Sigmoid colon (tissue), 7 donors: ENCODE measurements at regions of chr7 and their contacts with region 1.

Region 1: DNA sequence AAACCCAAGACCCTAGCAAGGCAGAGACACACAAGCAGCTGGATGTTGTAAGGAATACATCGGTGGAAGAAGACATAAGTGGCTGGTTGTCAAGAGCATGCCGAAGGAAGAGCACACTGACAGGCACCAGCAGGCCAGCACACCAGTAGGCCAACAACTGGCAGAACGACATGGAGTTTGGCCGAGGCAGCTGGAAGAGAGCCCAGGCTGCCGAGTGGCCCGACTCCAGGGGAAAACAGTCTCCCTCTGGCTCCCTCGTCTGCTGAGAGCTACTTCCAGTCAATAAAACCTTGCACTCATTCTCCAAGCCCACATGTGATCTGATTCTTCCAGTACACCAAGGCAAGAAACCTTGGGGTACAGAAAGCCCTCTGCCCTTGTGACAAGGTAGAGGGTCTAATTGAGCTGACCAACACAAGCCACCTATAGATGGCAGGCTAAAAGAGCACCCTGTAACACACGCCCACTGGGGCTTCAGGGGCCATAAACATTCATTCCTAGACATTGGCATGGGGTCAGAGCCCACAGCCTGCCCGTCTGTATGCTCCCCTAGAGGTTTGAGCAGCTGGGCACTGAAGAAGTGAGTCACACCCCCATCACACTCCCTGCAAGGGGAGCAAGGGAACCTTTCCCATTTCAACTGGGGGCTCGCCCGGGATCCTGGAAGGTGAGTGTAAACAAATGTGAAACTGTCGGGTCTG is 14.7 kb upstream of the TNS3 start:
- DNase-seq: peak; percentile 91
- H3K4me3 ChIP-seq: no peak overlapping the region
- H3K27ac ChIP-seq: peak overlapping the region in 3 of 4 donors; percentile 68 to 78 (median 72)
- H3K4me1 ChIP-seq: peaks cover 0 to 46% (median 31%) of the 10 kb centered on the region in 4 donors
- H3K27me3 ChIP-seq: no peaks in the 10 kb centered on the region
- CTCF ChIP-seq: peak in 1 of 4 experiments; percentile 22
- EP300 ChIP-seq: peak in 2 of 4 donors; percentile 16 to 26
- POLR2A ChIP-seq: no peak

Region 2: GRCh38 chr7:47635091-47636080 is 38.7 kb after region 1 on chr7:
- intact Hi-C with region 1: loop called (anchors 5 kb)
- DNase-seq: peak; percentile 80
- H3K4me3 ChIP-seq: no peak overlapping the region
- H3K27ac ChIP-seq: peak overlapping the region; percentile 75 to 88 (median 83)
- H3K4me1 ChIP-seq: peaks cover 0 to 66% (median 58%) of the 10 kb centered on the region in 4 donors
- H3K27me3 ChIP-seq: no peaks in the 10 kb centered on the region
- CTCF ChIP-seq: no peak
- EP300 ChIP-seq: no peak
- POLR2A ChIP-seq: no peak